BJ (cell line): ENCODE measurements at regions of chr7 and their contacts with region 1.

Region 1: DNA sequence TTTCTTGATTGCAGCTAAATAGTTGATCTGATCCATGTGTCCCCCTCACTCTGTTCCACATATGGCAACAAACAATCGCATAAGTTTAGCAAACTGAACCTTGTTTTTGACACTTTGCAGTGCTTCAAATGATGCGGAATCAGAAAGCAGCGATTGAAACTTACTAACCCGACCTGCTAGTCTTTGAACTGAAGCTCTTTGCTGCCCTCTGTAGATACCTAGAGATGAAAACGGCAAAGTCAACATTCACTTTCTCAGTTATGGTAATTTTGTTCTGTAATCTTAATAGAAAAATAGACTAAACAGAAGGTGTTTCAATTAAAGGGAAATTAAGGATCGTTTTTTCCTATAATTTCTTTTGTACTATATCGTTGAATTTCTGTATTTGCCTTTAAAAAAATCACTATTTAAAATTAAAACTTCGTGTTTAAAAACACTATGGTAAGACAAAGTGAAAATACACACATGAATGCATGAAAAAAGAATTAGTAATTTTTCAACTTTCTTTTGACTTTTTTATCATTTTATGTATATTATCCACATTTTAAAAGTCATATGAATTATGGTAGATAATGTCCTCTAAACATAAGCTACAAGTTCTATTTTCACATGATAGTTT is 276.5 kb downstream of the MAGI2 start:
- DNase-seq: no peak
- H3K4me3 ChIP-seq: no peak overlapping the region
- H3K27me3 ChIP-seq: no peaks in the 10 kb centered on the region
- CTCF ChIP-seq: peak; percentile 72

Region 2: GRCh38 chr7:78510580-78511188 is 666.3 kb before region 1 on chr7:
- CTCF ChIA-PET with region 1: interaction called, 10 read pairs
- POLR2A ChIA-PET with region 1: no interaction called
- DNase-seq: no peak
- H3K4me3 ChIP-seq: no peak overlapping the region
- H3K27me3 ChIP-seq: no peaks in the 10 kb centered on the region; the same call in 1 of the 2 replicates
- CTCF ChIP-seq: peak; percentile 89